ENCODE measurements at regions of chr1 and their contacts with region 1.

Region 1: GRCh38 chr1:212035123-212035834 is at the starts of genes DTL and INTS7:
- DNase-seq: peak; percentile 99
- H3K4me3 Mint-ChIP-seq: peak within 1 kb of the TSS; percentile 95
- H3K27ac Mint-ChIP-seq: peak within 1 kb of the TSS; percentile 94
- H3K4me1 Mint-ChIP-seq: peaks cover 74% of the 10 kb centered on the region
- H3K27me3 Mint-ChIP-seq: peaks cover 3% of the 10 kb centered on the region
- total RNA-seq, gene DTL: 91.0 and 94.8 TPM in 2 replicates
- total RNA-seq, gene INTS7: 33.2 and 33.8 TPM in 2 replicates

Region 2: DNA sequence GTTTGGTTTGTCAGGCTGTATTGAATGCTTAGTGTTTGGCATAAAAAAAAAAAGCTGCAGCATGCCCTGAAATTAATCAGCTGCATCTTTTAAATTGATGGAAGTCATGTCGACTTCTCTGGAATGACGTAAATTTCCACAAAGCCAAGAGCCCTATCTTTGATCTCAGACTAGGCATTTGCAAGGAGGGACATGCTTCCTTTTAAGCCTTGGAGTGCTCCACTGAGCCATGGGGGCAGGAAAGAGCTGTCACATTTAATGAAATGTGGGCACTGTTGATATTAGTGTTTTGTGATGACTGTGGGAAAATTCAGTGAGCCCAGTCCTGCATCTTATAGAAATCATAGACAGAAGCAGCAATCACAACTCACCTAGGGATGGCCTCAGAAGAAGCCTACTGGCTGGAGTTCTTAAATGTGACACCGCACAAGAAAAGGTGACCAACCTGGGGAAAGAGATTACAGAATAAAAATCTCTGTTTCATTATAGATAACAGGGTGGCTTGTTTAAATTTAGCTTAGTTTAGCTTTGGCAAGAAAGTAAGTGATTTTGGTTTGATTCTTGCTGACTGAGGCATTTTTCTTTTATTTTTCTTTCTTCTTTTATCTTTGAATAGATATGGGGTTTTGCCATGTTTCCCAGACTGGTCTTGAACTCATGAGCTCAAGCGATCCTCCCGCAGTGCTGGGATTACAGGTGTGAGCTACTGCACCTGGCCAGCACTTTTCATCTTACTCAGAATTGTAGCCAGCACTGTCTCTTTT is 1518.4 kb before region 1 on chr1:
- intact Hi-C with region 1: no loop called
- DNase-seq: no peak
- H3K4me3 Mint-ChIP-seq: no peak overlapping the region
- H3K27ac Mint-ChIP-seq: no peak overlapping the region
- H3K4me1 Mint-ChIP-seq: no peaks in the 10 kb centered on the region
- H3K27me3 Mint-ChIP-seq: no peaks in the 10 kb centered on the region

Region 3: DNA sequence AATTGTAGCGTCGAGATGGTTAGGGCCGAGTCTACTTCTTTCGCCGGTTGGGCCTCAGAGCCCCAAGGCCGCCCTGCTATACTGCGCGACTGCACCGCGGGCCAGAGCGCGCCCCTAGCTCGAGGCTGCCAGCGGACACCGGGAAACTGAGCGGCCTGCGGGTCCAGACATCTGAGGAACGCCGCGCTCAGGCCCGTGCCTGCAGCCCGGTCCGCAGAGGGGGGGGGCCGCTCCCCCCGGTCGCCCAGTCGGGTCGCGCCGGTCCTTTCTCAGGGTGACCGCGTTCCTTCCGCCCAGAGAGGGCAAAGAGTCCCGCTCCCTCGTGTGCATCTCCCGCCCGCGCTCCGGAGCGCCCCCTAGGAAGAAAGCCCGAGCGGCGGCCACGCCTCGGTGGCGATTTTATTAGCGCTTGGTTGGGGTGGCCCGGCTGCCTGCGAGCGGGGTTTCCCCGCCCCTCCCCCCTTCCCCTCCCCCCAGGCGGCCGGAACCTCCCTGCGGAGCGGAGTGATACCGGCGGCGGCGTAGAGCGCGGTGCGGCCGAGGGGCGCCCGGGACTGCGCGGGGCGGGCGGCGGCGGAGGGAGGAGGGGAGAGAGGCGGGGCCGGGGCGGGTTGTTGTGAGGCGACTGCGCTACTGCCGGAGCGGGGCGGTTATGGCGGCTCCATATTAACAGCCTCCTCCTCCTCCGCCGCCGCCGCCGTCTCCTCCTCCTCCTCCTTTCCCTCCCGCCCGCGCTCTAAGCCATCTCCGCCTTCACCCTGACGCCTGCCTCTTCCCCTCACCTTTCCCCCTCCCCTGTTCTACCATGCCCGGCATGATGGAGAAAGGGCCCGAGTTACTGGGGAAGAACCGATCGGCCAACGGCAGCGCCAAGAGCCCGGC is 776.3 kb before region 1 on chr1 and contains the start of gene RCOR3:
- intact Hi-C with region 1: loop called (anchors 1 kb)
- DNase-seq: peak; percentile 85
- H3K4me3 Mint-ChIP-seq: peak within 1 kb of the TSS; percentile 90
- H3K27ac Mint-ChIP-seq: peak within 1 kb of the TSS; percentile 90
- H3K4me1 Mint-ChIP-seq: peaks cover 20% of the 10 kb centered on the region
- H3K27me3 Mint-ChIP-seq: peaks cover 4% of the 10 kb centered on the region
- total RNA-seq, gene RCOR3: 40.5 and 41.0 TPM in 2 replicates

Region 4: GRCh38 chr1:211680752-211681327 is 354.4 kb before region 1 on chr1:
- intact Hi-C with region 1: loop called (anchors 1 kb)
- DNase-seq: peak; percentile 64
- H3K4me3 Mint-ChIP-seq: no peak overlapping the region
- H3K27ac Mint-ChIP-seq: peak overlapping the region; percentile 86
- H3K4me1 Mint-ChIP-seq: peaks cover 14% of the 10 kb centered on the region
- H3K27me3 Mint-ChIP-seq: no peaks in the 10 kb centered on the region

Region 5: DNA sequence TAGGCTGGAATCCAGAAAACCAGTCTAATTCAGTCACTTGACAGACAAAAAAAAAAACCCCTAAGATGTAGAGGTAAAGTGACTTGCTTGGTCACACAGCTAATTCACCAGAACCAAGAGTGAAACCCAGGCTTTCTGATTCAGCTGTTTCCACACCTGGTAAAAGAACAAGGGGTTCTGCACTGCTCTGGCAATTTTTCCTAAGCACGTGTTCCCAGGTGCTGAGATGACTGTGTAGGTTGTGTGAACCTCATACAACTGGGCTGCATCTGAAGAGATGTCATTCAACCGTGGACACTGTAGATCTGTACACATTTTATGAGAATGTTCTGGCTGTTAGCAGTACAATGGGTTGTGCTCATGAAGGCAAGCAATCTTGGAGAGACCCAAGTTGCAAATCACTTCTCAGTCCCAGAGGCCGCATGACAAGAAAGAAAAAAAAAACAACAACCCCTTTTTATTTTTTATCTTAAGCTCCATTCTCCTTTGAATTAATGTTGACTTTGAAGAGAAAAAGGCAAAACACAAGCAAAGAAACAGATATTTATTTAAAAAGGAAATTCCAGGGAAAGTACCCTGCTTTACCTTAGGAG is 95.3 kb before region 1 on chr1:
- intact Hi-C with region 1: loop called (anchors 1 kb)
- DNase-seq: peak; percentile 33
- H3K4me3 Mint-ChIP-seq: no peak overlapping the region
- H3K27ac Mint-ChIP-seq: peak overlapping the region; percentile 2
- H3K4me1 Mint-ChIP-seq: peaks cover 47% of the 10 kb centered on the region
- H3K27me3 Mint-ChIP-seq: no peaks in the 10 kb centered on the region

Region 6: DNA sequence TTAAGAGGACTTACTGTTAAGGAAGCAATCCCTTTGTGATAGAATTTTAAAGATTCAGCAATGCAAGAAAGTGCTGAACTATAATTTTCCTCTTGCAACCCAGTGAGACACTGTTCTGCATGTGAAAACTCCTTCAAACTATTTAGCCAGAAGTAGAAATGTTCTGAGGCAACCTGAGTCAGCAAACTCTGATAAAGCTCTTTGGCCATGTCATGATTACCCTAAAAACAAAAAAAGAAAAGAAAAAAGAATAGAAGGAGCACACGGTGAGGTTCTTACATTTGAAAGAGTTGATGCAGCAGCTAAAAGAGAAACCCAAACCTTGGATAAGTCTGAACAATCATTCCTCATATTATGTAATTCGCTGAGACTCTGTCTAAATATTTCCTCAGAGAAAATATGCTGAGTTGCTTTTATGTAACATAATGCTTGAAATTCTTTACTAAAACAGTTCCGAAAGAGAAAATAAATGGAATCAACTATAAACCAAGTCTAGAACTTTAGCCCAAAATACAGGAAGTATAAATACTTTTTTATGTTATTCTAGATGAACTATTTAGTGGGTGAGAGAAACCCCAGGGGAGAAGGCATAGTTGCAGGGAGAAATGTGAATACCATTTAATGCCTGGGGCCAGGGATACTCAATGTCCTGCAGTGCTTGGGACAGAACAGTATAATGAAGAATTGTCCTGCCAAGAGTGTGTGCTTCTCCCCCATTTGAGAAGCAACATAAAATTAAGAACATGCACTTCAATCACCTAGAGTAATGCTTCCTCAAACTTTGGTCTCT is 59.9 kb before region 1 on chr1:
- intact Hi-C with region 1: no loop called
- DNase-seq: no peak
- H3K4me3 Mint-ChIP-seq: no peak overlapping the region
- H3K27ac Mint-ChIP-seq: no peak overlapping the region
- H3K4me1 Mint-ChIP-seq: no peaks in the 10 kb centered on the region
- H3K27me3 Mint-ChIP-seq: no peaks in the 10 kb centered on the region

Region 7: GRCh38 chr1:212414328-212415106 is 379.2 kb after region 1 on chr1 and contains the start of gene PACC1:
- intact Hi-C with region 1: loop called (anchors 1 kb)
- DNase-seq: peak; percentile 88
- H3K4me3 Mint-ChIP-seq: peak within 1 kb of the TSS; percentile 100
- H3K27ac Mint-ChIP-seq: peak within 1 kb of the TSS; percentile 97
- H3K4me1 Mint-ChIP-seq: peaks cover 21% of the 10 kb centered on the region
- H3K27me3 Mint-ChIP-seq: peaks cover 6% of the 10 kb centered on the region
- total RNA-seq, gene PACC1: 17.6 and 19.8 TPM in 2 replicates

Region 8: DNA sequence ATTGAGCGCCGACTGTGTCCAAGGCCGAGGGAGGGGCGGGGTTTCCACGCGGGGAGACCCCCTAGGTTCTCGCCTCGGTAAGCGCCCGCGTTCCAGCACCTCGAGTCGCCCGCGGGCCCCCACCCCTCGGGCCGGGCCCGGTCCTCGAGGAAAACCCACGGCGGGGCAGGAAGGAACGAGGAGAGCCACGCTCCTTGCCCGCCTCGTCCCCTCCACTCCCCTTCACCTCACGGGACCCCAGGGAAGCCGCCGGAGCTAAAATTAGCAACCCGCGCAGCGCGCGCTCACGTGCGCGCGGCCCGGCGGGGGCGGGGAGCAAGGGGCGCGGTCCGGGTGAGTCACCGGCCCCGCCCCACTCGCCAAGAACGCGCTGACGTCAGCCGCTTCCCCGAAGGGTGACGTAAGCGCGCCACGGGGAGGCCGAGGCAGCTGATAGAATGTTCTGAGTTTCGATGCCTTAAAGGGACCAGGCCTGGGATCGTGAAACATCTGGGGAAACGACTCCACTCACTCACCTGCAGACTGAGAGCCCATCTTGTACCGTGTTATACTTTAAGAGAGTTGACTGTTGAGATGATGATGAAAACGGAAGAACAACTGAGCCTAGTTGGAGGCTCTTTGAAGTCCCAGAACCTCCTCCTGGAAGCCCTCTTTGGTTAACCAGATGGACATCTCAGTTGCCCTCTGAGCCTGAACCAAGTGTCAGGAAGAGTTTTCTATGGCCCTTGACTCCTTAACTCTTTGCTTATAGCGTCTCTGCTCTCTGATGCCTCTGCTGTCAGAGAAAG is 523.6 kb after region 1 on chr1:
- intact Hi-C with region 1: loop called (anchors 2 kb)
- DNase-seq: peak; percentile 88
- H3K4me3 Mint-ChIP-seq: peak overlapping the region; percentile 61
- H3K27ac Mint-ChIP-seq: peak overlapping the region; percentile 93
- H3K4me1 Mint-ChIP-seq: peaks cover 10% of the 10 kb centered on the region
- H3K27me3 Mint-ChIP-seq: peaks cover 38% of the 10 kb centered on the region

Region 9: GRCh38 chr1:213015099-213016050 is 980.1 kb after region 1 on chr1 and contains the start of gene ANGEL2:
- intact Hi-C with region 1: loop called (anchors 5 kb)
- DNase-seq: peak; percentile 95
- H3K4me3 Mint-ChIP-seq: peak within 1 kb of the TSS; percentile 99
- H3K27ac Mint-ChIP-seq: peak within 1 kb of the TSS; percentile 99
- H3K4me1 Mint-ChIP-seq: peaks cover 35% of the 10 kb centered on the region
- H3K27me3 Mint-ChIP-seq: peaks cover 9% of the 10 kb centered on the region
- total RNA-seq, gene ANGEL2: 44.2 and 46.1 TPM in 2 replicates

Measured in activated T-helper 1 cell treated with anti-CD3 and anti-CD28 coated beads, Interleukin-12 subunit alpha, Interleukin-12 subunit beta, Interleukin-2, Interleukin-4 antibody, amounts not matched to agents 30 ng/mL and 10 ng/mL and 1 ng/mL, durations not matched to agents 14 hours and 24 hours and 36 hours (primary cell).